Caco-2 (cell line): ENCODE measurements at regions of chr10 and their contacts with region 1.

Region 1: GRCh38 chr10:21099291-21100062 is 202.4 kb upstream of the NEBL start:
- DNase-seq: no peak
- H3K4me3 ChIP-seq: no peak overlapping the region
- H3K4me3 Mint-ChIP-seq: no peak overlapping the region
- H3K27ac Mint-ChIP-seq: peak overlapping the region; percentile 96
- H3K4me1 ChIP-seq: peaks cover 26% of the 10 kb centered on the region
- H3K4me1 Mint-ChIP-seq: peaks cover 43% of the 10 kb centered on the region
- H3K27me3 ChIP-seq: no peaks in the 10 kb centered on the region
- H3K27me3 Mint-ChIP-seq: no peaks in the 10 kb centered on the region
- CTCF ChIP-seq: no peak

Region 2: GRCh38 chr10:21057989-21058388 is 41.5 kb before region 1 on chr10:
- CTCF ChIA-PET with region 1: no interaction called
- POLR2A ChIA-PET with region 1: no interaction called
- intact Hi-C with region 1: no loop called
- DNase-seq: no peak
- H3K4me3 ChIP-seq: no peak overlapping the region
- H3K4me3 Mint-ChIP-seq: no peak overlapping the region
- H3K27ac Mint-ChIP-seq: no peak overlapping the region
- H3K4me1 ChIP-seq: no peaks in the 10 kb centered on the region
- H3K4me1 Mint-ChIP-seq: no peaks in the 10 kb centered on the region
- H3K27me3 ChIP-seq: no peaks in the 10 kb centered on the region
- H3K27me3 Mint-ChIP-seq: peaks cover 2% of the 10 kb centered on the region
- CTCF ChIP-seq: no peak

Region 3: DNA sequence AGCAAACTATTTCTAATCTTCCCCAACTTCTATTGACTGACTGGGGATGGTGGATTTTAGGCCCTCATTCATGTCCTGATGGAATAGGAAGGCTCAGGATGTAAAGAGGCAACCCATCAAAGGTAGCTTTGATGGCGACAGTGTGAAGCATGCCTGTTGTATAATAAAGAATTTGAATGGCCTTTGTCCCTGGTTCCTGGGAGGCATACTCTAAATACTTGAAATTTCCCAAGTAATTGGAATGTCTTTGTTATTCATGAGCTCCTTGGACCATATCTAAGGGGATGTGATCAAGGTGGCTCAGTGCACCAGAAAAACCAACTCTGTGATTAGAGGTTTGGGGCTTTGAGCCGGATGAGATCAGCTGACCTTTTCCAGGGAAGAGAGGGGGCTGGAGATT is 62.2 kb after region 1 on chr10:
- CTCF ChIA-PET with region 1: no interaction called
- POLR2A ChIA-PET with region 1: interaction called, 7 read pairs
- intact Hi-C with region 1: loop called (anchors 1 kb)
- DNase-seq: peak; percentile 61 to 66
- H3K4me3 ChIP-seq: no peak overlapping the region
- H3K4me3 Mint-ChIP-seq: no peak overlapping the region
- H3K27ac Mint-ChIP-seq: peak overlapping the region; percentile 66
- H3K4me1 ChIP-seq: peaks cover 59% of the 10 kb centered on the region
- H3K4me1 Mint-ChIP-seq: peaks cover 57% of the 10 kb centered on the region
- H3K27me3 ChIP-seq: no peaks in the 10 kb centered on the region
- H3K27me3 Mint-ChIP-seq: no peaks in the 10 kb centered on the region
- CTCF ChIP-seq: no peak

Region 4: GRCh38 chr10:21242915-21243314 is 143.4 kb after region 1 on chr10:
- CTCF ChIA-PET with region 1: interaction called, 4 read pairs
- POLR2A ChIA-PET with region 1: interaction called, 3 read pairs
- intact Hi-C with region 1: loop called (anchors 1 kb)
- DNase-seq: peak; percentile 62 to 71
- H3K4me3 ChIP-seq: no peak overlapping the region
- H3K4me3 Mint-ChIP-seq: peak overlapping the region; percentile 61
- H3K27ac Mint-ChIP-seq: peak overlapping the region; percentile 84
- H3K4me1 ChIP-seq: peaks cover 19% of the 10 kb centered on the region
- H3K4me1 Mint-ChIP-seq: peaks cover 26% of the 10 kb centered on the region
- H3K27me3 ChIP-seq: no peaks in the 10 kb centered on the region
- H3K27me3 Mint-ChIP-seq: no peaks in the 10 kb centered on the region
- CTCF ChIP-seq: no peak

Region 5: DNA sequence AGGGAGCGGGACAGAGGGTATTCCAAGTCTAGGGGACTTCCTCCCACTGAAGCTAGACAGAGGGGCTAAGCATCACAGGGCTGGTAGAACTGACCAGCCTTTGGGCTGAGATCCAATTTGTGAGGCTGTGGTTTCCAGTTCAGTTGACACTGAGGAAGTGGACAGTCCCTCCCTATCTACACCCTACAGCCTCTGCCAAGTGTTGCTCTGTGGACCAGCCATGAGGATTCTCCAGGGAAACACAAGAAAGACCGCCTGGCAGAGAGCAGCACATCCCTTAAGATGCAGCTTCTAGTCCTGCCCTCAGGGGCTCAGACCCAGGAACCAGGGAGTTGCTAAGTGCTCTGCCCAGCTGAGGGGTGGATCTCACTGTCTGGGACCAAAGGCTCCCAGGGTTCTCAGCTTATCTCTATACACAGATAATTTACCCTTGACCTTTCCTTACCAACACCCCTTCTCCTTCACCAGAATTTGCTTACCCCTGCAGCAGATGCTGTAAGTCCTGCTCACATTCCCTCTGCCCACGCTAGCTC is 174.0 kb after region 1 on chr10:
- CTCF ChIA-PET with region 1: no interaction called
- POLR2A ChIA-PET with region 1: no interaction called
- intact Hi-C with region 1: loop called (anchors 5 kb)
- DNase-seq: no peak
- H3K4me3 ChIP-seq: no peak overlapping the region
- H3K4me3 Mint-ChIP-seq: no peak overlapping the region
- H3K27ac Mint-ChIP-seq: no peak overlapping the region
- H3K4me1 ChIP-seq: no peaks in the 10 kb centered on the region
- H3K4me1 Mint-ChIP-seq: peaks cover 10% of the 10 kb centered on the region
- H3K27me3 ChIP-seq: no peaks in the 10 kb centered on the region
- H3K27me3 Mint-ChIP-seq: no peaks in the 10 kb centered on the region
- CTCF ChIP-seq: no peak

Region 6: GRCh38 chr10:21525367-21526183 is 426.1 kb after region 1 on chr10 and contains the start of gene SKIDA1:
- CTCF ChIA-PET with region 1: no interaction called
- POLR2A ChIA-PET with region 1: no interaction called
- intact Hi-C with region 1: loop called (anchors 5 kb)
- DNase-seq: peak; percentile 96 to 97
- H3K4me3 ChIP-seq: peak within 1 kb of the TSS; percentile 70
- H3K4me3 Mint-ChIP-seq: peak within 1 kb of the TSS; percentile 88
- H3K27ac Mint-ChIP-seq: peak within 1 kb of the TSS; percentile 98
- H3K4me1 ChIP-seq: peaks cover 30% of the 10 kb centered on the region
- H3K4me1 Mint-ChIP-seq: peaks cover 31% of the 10 kb centered on the region
- H3K27me3 ChIP-seq: no peaks in the 10 kb centered on the region
- H3K27me3 Mint-ChIP-seq: no peaks in the 10 kb centered on the region
- CTCF ChIP-seq: no peak
- total RNA-seq, gene SKIDA1: 5.7 and 6.3 TPM in 2 replicates